ENCODE measurements at regions of chr12 and their contacts with region 1.

Region 1: GRCh38 chr12:109443794-109444193 is 33.3 kb downstream of the KCTD10 start:
- DNase-seq: no peak
- ATAC-seq: no peak
- H3K4me3 Mint-ChIP-seq: no peak overlapping the region
- H3K27ac Mint-ChIP-seq: no peak overlapping the region
- H3K4me1 Mint-ChIP-seq: no peaks in the 10 kb centered on the region
- H3K27me3 Mint-ChIP-seq: no peaks in the 10 kb centered on the region
- CTCF ChIP-seq: no peak

Region 2: GRCh38 chr12:109428037-109428629 is 15.7 kb before region 1 on chr12:
- CTCF ChIA-PET with region 1: interaction called, 20 read pairs
- POLR2A ChIA-PET with region 1: no interaction called
- intact Hi-C with region 1: no loop called
- DNase-seq: peak; percentile 81
- ATAC-seq: peak; percentile 95
- H3K4me3 Mint-ChIP-seq: no peak overlapping the region
- H3K27ac Mint-ChIP-seq: no peak overlapping the region
- H3K4me1 Mint-ChIP-seq: peaks cover 5% of the 10 kb centered on the region
- H3K27me3 Mint-ChIP-seq: peaks cover 6% of the 10 kb centered on the region
- CTCF ChIP-seq: peak; percentile 90

Region 3: DNA sequence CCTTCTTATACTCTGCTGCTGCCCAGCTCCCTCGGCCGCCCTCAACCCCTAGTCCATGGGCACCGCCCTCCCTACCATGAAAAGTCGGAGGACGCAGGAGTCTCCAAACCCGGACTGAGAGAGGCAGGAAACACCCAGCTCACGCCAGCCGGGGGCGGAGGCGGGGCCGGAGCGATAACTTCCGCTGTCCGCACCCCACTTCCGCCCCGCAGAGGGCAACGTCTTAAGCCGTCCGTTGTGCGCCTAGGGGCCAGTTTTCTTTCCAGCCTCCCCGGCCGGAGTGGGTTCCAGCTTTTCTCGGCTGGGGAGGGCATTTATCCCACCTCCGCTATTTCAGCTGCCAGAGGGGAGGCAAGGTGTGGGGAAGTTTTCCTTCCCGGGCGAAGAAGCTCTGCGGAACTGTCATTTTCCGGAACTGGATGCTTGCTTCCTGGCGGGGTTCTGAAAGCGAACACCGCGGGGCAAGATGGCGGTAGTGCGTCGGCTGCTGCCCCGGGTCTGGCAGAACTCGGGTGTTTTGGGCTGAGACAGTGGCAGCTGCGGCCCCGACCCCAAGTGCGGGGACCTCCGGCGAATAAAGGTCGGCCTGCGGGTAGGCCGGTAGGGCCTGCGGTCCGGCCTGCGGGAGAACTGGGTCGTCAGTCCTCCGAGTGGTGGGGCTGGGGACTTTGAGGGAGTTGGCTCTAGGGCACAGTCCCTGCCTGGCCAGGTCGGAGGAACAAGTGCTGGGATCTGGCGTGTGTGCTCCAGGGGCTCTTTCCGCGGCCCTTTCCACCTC is 33.6 kb after region 1 on chr12 and contains the starts of genes KCTD10 and UBE3B:
- CTCF ChIA-PET with region 1: no interaction called
- POLR2A ChIA-PET with region 1: no interaction called
- intact Hi-C with region 1: no loop called
- DNase-seq: peak; percentile 90
- ATAC-seq: peak; percentile 97
- H3K4me3 Mint-ChIP-seq: peak within 1 kb of the TSS; percentile 82
- H3K27ac Mint-ChIP-seq: peak within 1 kb of the TSS; percentile 100
- H3K4me1 Mint-ChIP-seq: peaks cover 32% of the 10 kb centered on the region
- H3K27me3 Mint-ChIP-seq: no peaks in the 10 kb centered on the region
- CTCF ChIP-seq: no peak
- total RNA-seq, gene KCTD10: 37.4 to 38.2 TPM
- total RNA-seq, gene UBE3B: 22.5 to 24.9 TPM